Left colon (tissue), 2 donors: ENCODE measurements at regions of chr15 and their contacts with region 1.

Region 1: GRCh38 chr15:33292717-33293307 is 18.0 kb upstream of the RYR3 start:
- DNase-seq: peak in 1 of 2 donors; percentile 67
- ATAC-seq: peak; percentile 40

Region 2: DNA sequence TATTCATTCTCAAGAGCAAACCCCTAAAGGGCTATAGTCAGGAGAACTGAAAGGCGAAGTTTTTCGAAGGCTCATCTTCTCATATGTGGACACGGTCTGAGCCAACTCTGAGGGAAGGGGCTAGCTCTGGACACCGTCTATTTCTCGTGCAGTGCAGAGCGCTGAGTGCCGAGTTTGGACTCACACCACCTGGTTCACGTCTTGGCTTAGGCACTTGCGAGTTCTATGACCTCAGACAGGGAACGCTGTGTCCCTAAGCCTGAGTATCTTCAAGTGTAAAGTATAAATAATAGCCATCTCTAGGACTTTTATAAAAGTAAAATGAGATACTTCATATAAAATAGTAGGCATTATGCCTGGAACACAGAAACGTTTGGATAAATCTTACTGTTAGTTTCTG is 322.0 kb before region 1 on chr15:
- intact Hi-C with region 1: no loop called
- DNase-seq: peak in 1 of 2 donors; percentile 44
- ATAC-seq: no peak

Region 3: GRCh38 chr15:33234014-33234461 is 58.8 kb before region 1 on chr15:
- intact Hi-C with region 1: no loop called
- DNase-seq: no peak
- ATAC-seq: peak; percentile 44

Region 4: GRCh38 chr15:33330931-33331330 is 38.1 kb after region 1 on chr15:
- intact Hi-C with region 1: no loop called
- DNase-seq: no peak
- ATAC-seq: no peak

Region 5: GRCh38 chr15:33608714-33609113 is 315.9 kb after region 1 on chr15:
- intact Hi-C with region 1: loop called in 1 of 2 experiments (anchors 10 kb)
- DNase-seq: no peak
- ATAC-seq: no peak

Region 6: GRCh38 chr15:33699691-33700447 is 407.1 kb after region 1 on chr15:
- intact Hi-C with region 1: loop called in 1 of 2 experiments (anchors 5 kb)
- DNase-seq: no peak
- ATAC-seq: no peak